Left ventricle myocardium inferior (tissue), 1 donor: ENCODE measurements at regions of chr2 and their contacts with region 1.

Region 1: GRCh38 chr2:164560181-164560792 is 61.0 kb downstream of the GRB14 start:
- DNase-seq: no peak
- H3K4me3 ChIP-seq: peak overlapping the region; percentile 44
- H3K27ac ChIP-seq: peak overlapping the region; percentile 41
- H3K4me1 ChIP-seq: peaks cover 25% of the 10 kb centered on the region
- H3K27me3 ChIP-seq: no peaks in the 10 kb centered on the region
- CTCF ChIP-seq: peak; percentile 78

Region 2: GRCh38 chr2:164697674-164698461 is 137.6 kb after region 1 on chr2:
- intact Hi-C with region 1: loop called (anchors 10 kb)
- DNase-seq: no peak
- H3K4me3 ChIP-seq: no peak overlapping the region
- H3K27ac ChIP-seq: no peak overlapping the region
- H3K4me1 ChIP-seq: no peaks in the 10 kb centered on the region
- H3K27me3 ChIP-seq: no peaks in the 10 kb centered on the region
- CTCF ChIP-seq: peak; percentile 65

Region 3: GRCh38 chr2:164725542-164725941 is 165.3 kb after region 1 on chr2:
- intact Hi-C with region 1: no loop called
- DNase-seq: no peak
- H3K4me3 ChIP-seq: no peak overlapping the region
- H3K27ac ChIP-seq: no peak overlapping the region
- H3K4me1 ChIP-seq: peaks cover 21% of the 10 kb centered on the region
- H3K27me3 ChIP-seq: no peaks in the 10 kb centered on the region
- CTCF ChIP-seq: no peak